MCF 10A (cell line): ENCODE measurements at regions of chr4 and their contacts with region 1.

Region 1: GRCh38 chr4:117134386-117134785 is 49.0 kb upstream of the TRAM1L1 start:
- DNase-seq: peak; percentile 71
- H3K4me3 Mint-ChIP-seq: no peak overlapping the region
- H3K27ac Mint-ChIP-seq: peak overlapping the region; percentile 23
- H3K4me1 Mint-ChIP-seq: peaks cover 13% of the 10 kb centered on the region
- H3K27me3 Mint-ChIP-seq: no peaks in the 10 kb centered on the region
- CTCF ChIP-seq: peak; percentile 53

Region 2: DNA sequence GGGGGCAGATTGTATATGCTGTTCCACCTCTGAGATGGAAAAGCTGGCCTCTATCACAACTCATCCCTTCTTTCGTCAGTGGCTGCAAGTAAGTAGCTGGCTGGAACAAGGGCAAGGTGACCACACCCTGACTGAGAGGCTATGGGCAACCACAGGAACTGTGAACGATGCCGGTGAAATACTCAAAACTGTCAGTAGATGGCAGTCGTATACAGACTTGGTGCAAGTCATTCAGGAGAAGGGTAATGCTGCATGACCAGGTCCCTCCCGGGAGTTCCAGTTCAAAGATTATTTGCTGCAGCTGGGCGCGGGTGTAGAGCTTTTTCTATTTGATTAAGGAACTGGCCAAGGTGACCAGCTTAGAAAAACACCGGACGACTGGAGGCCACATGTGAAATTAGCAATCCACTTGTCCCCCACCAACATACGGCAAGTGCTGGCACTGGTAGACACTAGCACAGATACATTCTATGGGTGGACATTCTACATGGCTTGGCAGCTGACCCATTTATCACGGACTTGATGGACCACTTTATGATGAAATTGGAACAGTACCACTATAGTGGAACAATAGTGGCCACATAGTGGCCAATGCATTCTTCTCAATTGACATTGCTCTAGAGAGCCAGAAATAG is 775.7 kb before region 1 on chr4:
- CTCF ChIA-PET with region 1: interaction called, 7 read pairs
- POLR2A ChIA-PET with region 1: no interaction called
- intact Hi-C with region 1: loop called (anchors 1 kb)
- DNase-seq: peak; percentile 87
- H3K4me3 Mint-ChIP-seq: no peak overlapping the region
- H3K27ac Mint-ChIP-seq: no peak overlapping the region
- H3K4me1 Mint-ChIP-seq: peaks cover 7% of the 10 kb centered on the region
- H3K27me3 Mint-ChIP-seq: no peaks in the 10 kb centered on the region
- CTCF ChIP-seq: peak; percentile 80

Region 3: GRCh38 chr4:117042962-117043361 is 91.4 kb before region 1 on chr4:
- CTCF ChIA-PET with region 1: no interaction called
- POLR2A ChIA-PET with region 1: no interaction called
- intact Hi-C with region 1: no loop called
- DNase-seq: no peak
- H3K4me3 Mint-ChIP-seq: no peak overlapping the region
- H3K27ac Mint-ChIP-seq: no peak overlapping the region
- H3K4me1 Mint-ChIP-seq: no peaks in the 10 kb centered on the region
- H3K27me3 Mint-ChIP-seq: no peaks in the 10 kb centered on the region
- CTCF ChIP-seq: no peak

Region 4: DNA sequence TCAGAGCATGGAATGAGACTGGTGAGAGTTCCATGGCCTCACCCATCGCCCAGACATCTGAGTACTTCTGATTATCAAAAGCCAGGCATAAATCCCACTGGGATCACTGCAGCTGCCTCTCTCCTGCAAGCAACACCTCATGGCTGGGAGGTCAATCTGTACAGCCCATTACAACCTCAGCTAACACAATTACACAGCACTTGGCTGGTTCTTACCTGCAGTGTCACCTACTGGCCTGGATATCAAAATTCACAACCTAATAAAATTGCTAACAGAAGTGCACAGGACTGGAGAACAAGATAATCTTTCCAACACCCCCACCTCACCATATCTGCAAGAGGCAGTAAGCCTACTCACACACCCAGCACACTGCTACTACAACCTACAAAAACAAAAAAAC is 558.2 kb after region 1 on chr4:
- CTCF ChIA-PET with region 1: no interaction called
- POLR2A ChIA-PET with region 1: no interaction called
- intact Hi-C with region 1: loop called (anchors 10 kb)
- DNase-seq: no peak
- H3K4me3 Mint-ChIP-seq: no peak overlapping the region
- H3K27ac Mint-ChIP-seq: no peak overlapping the region
- H3K4me1 Mint-ChIP-seq: peaks cover 6% of the 10 kb centered on the region
- H3K27me3 Mint-ChIP-seq: no peaks in the 10 kb centered on the region
- CTCF ChIP-seq: no peak

Region 5: DNA sequence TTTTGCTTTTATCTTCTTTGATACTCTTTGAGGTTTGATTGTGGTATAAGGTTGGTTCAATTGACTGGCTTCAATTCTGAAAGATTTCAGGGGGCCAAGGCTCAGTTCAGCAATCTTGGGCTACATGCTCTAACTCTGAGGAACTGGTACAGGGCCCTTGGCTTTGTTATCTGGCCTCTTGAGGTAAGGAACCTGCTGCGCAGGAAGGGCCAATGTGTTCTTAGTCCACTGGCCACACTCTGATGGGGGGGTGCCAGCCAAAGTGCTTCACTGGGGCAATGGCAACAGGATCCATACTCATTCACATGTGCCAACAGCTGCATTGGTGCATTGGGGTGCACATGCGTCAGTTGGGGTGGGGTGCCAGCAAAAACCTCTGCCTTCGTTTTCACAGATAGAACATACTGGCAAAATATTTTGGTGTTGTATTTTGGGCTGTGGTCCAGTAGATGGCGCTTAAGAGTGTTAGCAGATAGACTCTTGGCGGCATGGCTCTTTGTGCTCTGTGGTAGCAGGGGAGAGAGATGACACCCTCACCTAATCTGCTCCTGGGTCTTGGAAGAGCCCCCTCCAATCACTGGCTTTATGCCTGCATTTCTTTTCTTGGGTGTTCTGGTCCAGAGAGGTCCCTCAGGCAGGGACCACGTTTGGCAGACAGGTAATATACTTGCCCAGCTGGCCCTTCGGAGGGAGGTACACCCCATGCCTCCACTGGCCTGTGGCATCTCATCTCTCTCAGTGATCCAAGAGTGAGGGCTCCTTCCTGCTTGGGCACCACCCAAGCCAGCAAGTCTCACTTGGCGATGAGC is 942.8 kb after region 1 on chr4:
- CTCF ChIA-PET with region 1: interaction called, 3 read pairs
- POLR2A ChIA-PET with region 1: no interaction called
- intact Hi-C with region 1: loop called (anchors 1 kb)
- DNase-seq: peak; percentile 59
- H3K4me3 Mint-ChIP-seq: no peak overlapping the region
- H3K27ac Mint-ChIP-seq: no peak overlapping the region
- H3K4me1 Mint-ChIP-seq: no peaks in the 10 kb centered on the region
- H3K27me3 Mint-ChIP-seq: no peaks in the 10 kb centered on the region
- CTCF ChIP-seq: peak; percentile 62

Region 6: GRCh38 chr4:118270492-118270891 is 1136.1 kb after region 1 on chr4:
- CTCF ChIA-PET with region 1: interaction called, 3 read pairs
- POLR2A ChIA-PET with region 1: no interaction called
- intact Hi-C with region 1: loop called (anchors 1 kb)
- DNase-seq: peak; percentile 69
- H3K4me3 Mint-ChIP-seq: no peak overlapping the region
- H3K27ac Mint-ChIP-seq: no peak overlapping the region
- H3K4me1 Mint-ChIP-seq: no peaks in the 10 kb centered on the region
- H3K27me3 Mint-ChIP-seq: no peaks in the 10 kb centered on the region
- CTCF ChIP-seq: peak; percentile 54